CD8-positive, alpha-beta T cell (primary cell): ENCODE measurements at regions of chr3 and their contacts with region 1.

Region 1: DNA sequence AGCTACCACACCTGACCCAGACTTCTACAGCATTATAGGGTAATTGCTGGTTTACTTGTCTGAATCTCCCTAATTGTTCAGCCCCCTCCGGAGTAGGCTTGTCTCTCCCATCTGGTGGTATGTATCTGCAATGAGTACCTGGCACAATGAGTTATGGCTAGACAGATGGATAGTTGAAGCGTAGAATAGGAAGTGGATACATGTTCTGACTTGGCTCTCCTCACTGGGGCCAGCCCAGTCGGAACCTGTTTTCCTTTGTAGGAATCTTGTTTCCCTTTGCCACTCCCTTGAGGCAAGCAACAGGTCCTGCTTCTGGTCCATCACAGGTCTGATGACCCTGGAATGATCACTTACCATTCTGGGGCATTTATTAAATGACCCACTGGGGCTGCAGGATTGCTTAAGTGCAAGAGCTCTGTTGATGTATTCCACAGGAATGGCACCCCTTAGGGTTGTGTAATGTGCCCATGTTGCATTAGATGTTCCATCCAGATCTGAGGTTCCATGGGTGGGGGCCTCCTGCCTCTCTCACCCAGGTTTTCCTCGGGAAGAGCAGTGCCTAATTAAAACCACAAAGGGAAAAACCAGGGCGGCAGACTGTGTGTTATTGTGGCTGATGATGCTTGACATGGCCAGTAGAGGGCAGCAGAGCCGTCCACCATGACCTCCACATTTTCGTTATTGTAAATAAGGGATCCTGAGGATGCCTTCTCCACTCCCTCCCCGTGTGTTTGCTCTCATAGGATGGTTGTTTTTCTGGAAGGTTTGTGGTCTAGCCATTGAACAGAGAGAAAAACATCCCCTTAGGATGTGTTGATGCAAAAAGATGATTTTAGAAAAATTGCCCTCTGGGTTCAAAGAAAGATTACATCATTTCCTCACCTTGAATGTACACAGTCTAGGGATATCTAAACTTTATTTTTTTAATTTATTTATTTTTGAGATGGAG is 58.0 kb downstream of the CMTM8 start:
- DNase-seq: peak; percentile 16 to 79 (median 62)
- ATAC-seq: peak; percentile 76
- H3K4me3 ChIP-seq: no peak overlapping the region
- H3K4me3 Mint-ChIP-seq: peak overlapping the region; percentile 61
- H3K27ac ChIP-seq: no peak overlapping the region
- H3K27ac Mint-ChIP-seq: peak overlapping the region; percentile 85
- H3K4me1 ChIP-seq: peaks cover 7% of the 10 kb centered on the region
- H3K4me1 Mint-ChIP-seq: peaks cover 15% of the 10 kb centered on the region
- H3K27me3 ChIP-seq: no peaks in the 10 kb centered on the region
- H3K27me3 Mint-ChIP-seq: no peaks in the 10 kb centered on the region
- CTCF ChIP-seq: peak; percentile 91

Region 2: DNA sequence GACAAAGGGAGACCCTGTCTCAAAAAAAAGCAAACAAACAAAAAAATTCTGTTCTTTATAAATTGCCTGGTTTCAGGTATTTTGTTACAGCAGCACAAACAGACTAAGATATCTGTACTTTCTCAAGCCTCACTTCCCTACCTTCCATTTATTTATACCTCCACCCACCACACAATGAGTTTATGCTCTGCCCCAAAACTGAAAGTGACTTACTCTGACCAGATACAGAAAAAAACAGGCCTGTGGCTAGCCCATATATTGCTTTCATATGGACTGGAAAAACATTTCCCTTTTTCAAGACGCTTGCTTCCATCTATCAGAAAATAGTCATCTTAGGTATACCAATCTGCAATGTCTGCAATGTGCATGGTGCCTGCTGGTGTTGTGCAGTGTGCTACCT is 198.8 kb before region 1 on chr3:
- CTCF ChIA-PET with region 1: no interaction called
- POLR2A ChIA-PET with region 1: no interaction called
- intact Hi-C with region 1: no loop called
- DNase-seq: no peak
- ATAC-seq: no peak
- H3K4me3 ChIP-seq: no peak overlapping the region
- H3K4me3 Mint-ChIP-seq: no peak overlapping the region
- H3K27ac ChIP-seq: no peak overlapping the region
- H3K27ac Mint-ChIP-seq: no peak overlapping the region
- H3K4me1 ChIP-seq: no peaks in the 10 kb centered on the region
- H3K4me1 Mint-ChIP-seq: no peaks in the 10 kb centered on the region
- H3K27me3 ChIP-seq: no peaks in the 10 kb centered on the region
- H3K27me3 Mint-ChIP-seq: peaks cover 8% of the 10 kb centered on the region
- CTCF ChIP-seq: no peak

Region 3: DNA sequence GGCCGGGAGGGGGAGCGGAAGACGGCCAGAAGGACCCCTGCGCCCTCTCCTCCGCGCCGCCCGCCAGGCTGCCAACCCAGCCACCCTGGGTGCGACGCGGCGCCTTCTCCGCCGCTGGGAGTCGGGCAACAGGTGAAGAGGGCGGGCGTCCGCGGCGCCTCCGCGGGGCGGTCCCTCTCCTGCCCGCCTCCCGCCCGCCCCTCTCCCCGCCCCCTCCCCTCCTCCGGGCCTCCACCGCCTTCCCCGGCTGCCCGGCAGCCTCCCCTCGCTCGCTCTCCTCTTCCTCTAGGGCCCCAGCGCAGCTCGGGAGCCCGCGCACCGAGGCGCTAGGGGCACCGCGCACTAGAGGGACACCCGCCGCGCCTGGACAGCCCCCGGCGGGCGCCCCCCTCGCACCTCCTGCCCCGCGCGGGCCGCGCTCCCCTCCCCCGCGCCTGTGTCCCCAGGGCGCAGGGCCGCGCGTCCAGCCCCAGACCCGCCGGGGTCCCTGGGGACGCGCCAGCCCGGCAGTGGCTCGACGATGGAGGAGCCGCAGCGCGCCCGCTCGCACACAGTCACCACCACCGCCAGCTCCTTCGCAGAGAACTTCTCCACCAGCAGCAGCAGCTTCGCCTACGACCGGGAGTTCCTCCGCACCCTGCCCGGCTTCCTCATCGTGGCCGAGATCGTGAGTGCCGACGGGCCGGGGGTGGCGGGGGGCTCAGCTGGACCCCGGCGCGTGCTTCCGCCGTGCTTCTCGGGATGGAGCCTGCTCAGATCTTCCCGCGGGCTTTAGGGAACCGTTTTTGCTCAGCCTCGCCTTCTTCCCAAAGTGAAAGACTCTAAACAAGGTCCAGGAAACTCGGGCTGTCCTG is 57.9 kb before region 1 on chr3 and contains the start of gene CMTM8:
- CTCF ChIA-PET with region 1: interaction called, 11 read pairs
- POLR2A ChIA-PET with region 1: no interaction called
- intact Hi-C with region 1: loop called in 1 of 2 experiments (anchors 5 kb)
- DNase-seq: peak; percentile 16 to 76 (median 58)
- ATAC-seq: peak; percentile 84
- H3K4me3 ChIP-seq: peak within 1 kb of the TSS; percentile 55 to 68
- H3K4me3 Mint-ChIP-seq: peak within 1 kb of the TSS; percentile 86
- H3K27ac ChIP-seq: peak within 1 kb of the TSS in 1 of 2 experiments; percentile 18
- H3K27ac Mint-ChIP-seq: peak within 1 kb of the TSS; percentile 49
- H3K4me1 ChIP-seq: peaks cover 19% of the 10 kb centered on the region
- H3K4me1 Mint-ChIP-seq: peaks cover 24% of the 10 kb centered on the region
- H3K27me3 ChIP-seq: peaks cover 0 to 10% of the 10 kb centered on the region in 2 experiments
- H3K27me3 Mint-ChIP-seq: peaks cover 3% of the 10 kb centered on the region
- CTCF ChIP-seq: no peak
- total RNA-seq, gene CMTM8: 0.58 to 0.87 TPM

Region 4: GRCh38 chr3:32323604-32324285 is 27.2 kb after region 1 on chr3:
- CTCF ChIA-PET with region 1: interaction called, 15 read pairs
- POLR2A ChIA-PET with region 1: no interaction called
- intact Hi-C with region 1: no loop called
- DNase-seq: no peak
- ATAC-seq: no peak
- H3K4me3 ChIP-seq: no peak overlapping the region
- H3K4me3 Mint-ChIP-seq: no peak overlapping the region
- H3K27ac ChIP-seq: no peak overlapping the region
- H3K27ac Mint-ChIP-seq: no peak overlapping the region
- H3K4me1 ChIP-seq: no peaks in the 10 kb centered on the region
- H3K4me1 Mint-ChIP-seq: peaks cover 2% of the 10 kb centered on the region
- H3K27me3 ChIP-seq: no peaks in the 10 kb centered on the region
- H3K27me3 Mint-ChIP-seq: peaks cover 2% of the 10 kb centered on the region
- CTCF ChIP-seq: no peak

Region 5: GRCh38 chr3:32340039-32340438 is 43.5 kb after region 1 on chr3:
- CTCF ChIA-PET with region 1: interaction called, 56 read pairs
- POLR2A ChIA-PET with region 1: no interaction called
- intact Hi-C with region 1: loop called (anchors 1 to 2 kb)
- DNase-seq: peak in 6 of 9 experiments; percentile 21 to 64 (median 40)
- ATAC-seq: peak; percentile 78
- H3K4me3 ChIP-seq: no peak overlapping the region
- H3K4me3 Mint-ChIP-seq: no peak overlapping the region
- H3K27ac ChIP-seq: no peak overlapping the region
- H3K27ac Mint-ChIP-seq: no peak overlapping the region
- H3K4me1 ChIP-seq: peaks cover 13% of the 10 kb centered on the region
- H3K4me1 Mint-ChIP-seq: peaks cover 17% of the 10 kb centered on the region
- H3K27me3 ChIP-seq: no peaks in the 10 kb centered on the region
- H3K27me3 Mint-ChIP-seq: no peaks in the 10 kb centered on the region
- CTCF ChIP-seq: peak; percentile 66

Region 6: GRCh38 chr3:32667122-32667521 is 370.6 kb after region 1 on chr3:
- CTCF ChIA-PET with region 1: no interaction called
- POLR2A ChIA-PET with region 1: no interaction called
- intact Hi-C with region 1: loop called in 1 of 2 experiments (anchors 2 kb)
- DNase-seq: no peak
- ATAC-seq: no peak
- H3K4me3 ChIP-seq: no peak overlapping the region
- H3K4me3 Mint-ChIP-seq: no peak overlapping the region
- H3K27ac ChIP-seq: no peak overlapping the region
- H3K27ac Mint-ChIP-seq: no peak overlapping the region
- H3K4me1 ChIP-seq: no peaks in the 10 kb centered on the region
- H3K4me1 Mint-ChIP-seq: no peaks in the 10 kb centered on the region
- H3K27me3 ChIP-seq: peaks cover 0 to 2% of the 10 kb centered on the region in 2 experiments
- H3K27me3 Mint-ChIP-seq: peaks cover 6% of the 10 kb centered on the region
- CTCF ChIP-seq: no peak